ENCODE measurements at regions of chr6 and their contacts with region 1.

Region 1: DNA sequence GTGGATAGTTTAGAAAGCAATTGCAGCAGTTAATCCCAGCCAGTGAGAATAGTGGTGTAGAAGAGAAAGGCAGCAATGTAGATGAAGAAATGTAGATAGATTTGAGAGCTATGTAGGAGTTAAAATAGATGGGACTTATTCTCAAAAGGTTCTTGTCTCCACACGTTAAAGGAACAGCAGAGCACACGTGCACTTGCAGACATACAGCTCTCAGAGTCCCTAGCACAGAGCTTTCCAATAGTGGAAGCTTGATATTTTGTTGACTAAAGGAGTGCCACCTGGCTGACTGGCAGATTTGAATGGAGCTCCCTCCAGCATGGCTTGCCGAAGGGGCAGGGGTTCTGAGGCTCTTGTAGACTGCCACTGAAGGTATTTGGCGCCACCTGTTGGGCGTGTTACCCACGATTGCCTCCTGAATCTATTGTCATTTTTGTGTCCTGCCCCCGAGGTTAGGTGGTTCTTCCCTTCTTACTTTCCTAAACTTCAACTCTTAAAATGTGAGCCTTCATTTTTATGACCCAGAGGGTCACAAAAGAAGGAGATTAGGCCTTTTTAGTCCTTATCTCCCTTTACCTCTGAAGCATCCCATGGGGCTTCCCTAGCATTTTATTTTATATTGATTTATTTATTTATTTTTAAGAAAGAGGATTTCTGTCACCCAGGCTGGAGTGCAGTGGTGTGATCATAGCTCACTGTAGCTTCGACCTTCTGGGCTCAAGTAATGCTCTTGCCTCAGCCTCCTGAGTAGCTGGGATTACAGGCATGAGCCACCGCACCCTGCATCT is 16.4 kb downstream of the BRD2 start:
- DNase-seq: peak; percentile 75
- H3K4me3 Mint-ChIP-seq: no peak overlapping the region
- H3K27ac Mint-ChIP-seq: peak overlapping the region; percentile 29
- H3K4me1 Mint-ChIP-seq: peaks cover 19% of the 10 kb centered on the region
- H3K27me3 Mint-ChIP-seq: peaks cover 2% of the 10 kb centered on the region

Region 2: DNA sequence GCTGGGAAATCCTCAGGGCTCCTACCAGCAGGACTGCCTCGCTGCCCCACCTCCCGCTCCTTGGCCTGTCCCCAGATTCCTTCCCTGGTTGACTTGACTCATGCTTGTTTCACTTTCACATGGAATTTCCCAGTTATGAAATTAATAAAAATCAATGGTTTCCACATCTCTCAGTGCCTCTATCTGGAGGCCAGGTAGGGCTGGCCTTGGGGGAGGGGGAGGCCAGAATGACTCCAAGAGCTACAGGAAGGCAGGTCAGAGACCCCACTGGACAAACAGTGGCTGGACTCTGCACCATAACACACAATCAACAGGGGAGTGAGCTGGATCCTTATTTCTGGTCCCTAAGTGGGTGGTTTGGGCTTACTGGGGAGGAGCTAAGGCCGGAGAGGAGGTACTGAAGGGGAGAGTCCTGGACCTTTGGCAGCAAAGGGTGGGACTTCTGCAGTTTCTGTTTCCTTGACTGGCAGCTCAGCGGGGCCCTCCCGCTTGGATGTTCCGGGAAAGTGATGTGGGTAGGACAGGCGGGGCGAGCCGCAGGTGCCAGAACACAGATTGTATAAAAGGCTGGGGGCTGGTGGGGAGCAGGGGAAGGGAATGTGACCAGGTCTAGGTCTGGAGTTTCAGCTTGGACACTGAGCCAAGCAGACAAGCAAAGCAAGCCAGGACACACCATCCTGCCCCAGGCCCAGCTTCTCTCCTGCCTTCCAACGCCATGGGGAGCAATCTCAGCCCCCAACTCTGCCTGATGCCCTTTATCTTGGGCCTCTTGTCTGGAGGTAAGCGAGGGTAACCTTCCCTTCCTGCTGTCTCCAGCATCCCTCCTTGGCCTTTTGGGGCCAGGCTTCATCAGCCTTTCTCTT is 1039.1 kb before region 1 on chr6 and contains the start of gene CFB:
- intact Hi-C with region 1: no loop called
- DNase-seq: no peak
- H3K4me3 Mint-ChIP-seq: no peak within 1 kb of the TSS
- H3K27ac Mint-ChIP-seq: no peak within 1 kb of the TSS
- H3K4me1 Mint-ChIP-seq: peaks cover 5% of the 10 kb centered on the region
- H3K27me3 Mint-ChIP-seq: peaks cover 7% of the 10 kb centered on the region
- total RNA-seq, gene CFB: 0.16 TPM in 1 of 2 replicates, not detected in the other

Region 3: GRCh38 chr6:32439602-32440214 is 545.1 kb before region 1 on chr6 and contains the start of gene HLA-DRA:
- intact Hi-C with region 1: no loop called
- DNase-seq: peak; percentile 39
- H3K4me3 Mint-ChIP-seq: peak within 1 kb of the TSS; percentile 82
- H3K27ac Mint-ChIP-seq: peak within 1 kb of the TSS; percentile 64
- H3K4me1 Mint-ChIP-seq: peaks cover 26% of the 10 kb centered on the region
- H3K27me3 Mint-ChIP-seq: peaks cover 13% of the 10 kb centered on the region
- total RNA-seq, gene HLA-DRA: 20.8 and 23.7 TPM in 2 replicates

Region 4: DNA sequence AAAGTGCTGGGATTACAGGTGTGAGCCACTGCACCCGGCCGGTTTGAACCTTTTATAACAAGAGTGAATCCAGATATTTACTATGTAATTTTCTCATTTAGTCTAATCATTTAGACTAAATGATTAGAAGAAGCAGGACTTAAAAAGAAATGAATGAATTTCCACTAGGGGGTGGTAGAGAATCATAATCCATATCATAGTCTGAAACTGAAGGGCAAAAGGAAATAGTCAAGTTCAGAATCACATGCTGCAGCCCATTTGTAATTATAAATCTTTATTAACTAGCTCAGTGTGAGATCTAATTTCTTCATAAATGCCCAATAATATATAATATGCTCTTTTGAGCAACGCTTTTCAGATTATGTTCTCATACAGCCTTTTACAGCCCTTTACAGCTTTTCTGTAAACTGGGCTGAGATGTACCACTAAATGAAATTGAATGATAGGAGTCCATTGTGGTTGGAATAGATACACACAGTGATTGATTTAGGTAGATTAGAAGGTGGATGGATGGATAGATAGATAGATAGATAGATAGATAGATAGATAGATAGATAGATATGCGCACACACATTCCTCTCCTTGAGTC is 99.0 kb before region 1 on chr6:
- intact Hi-C with region 1: loop called (anchors 1 kb)
- DNase-seq: no peak
- H3K4me3 Mint-ChIP-seq: no peak overlapping the region
- H3K27ac Mint-ChIP-seq: no peak overlapping the region
- H3K4me1 Mint-ChIP-seq: peaks cover 8% of the 10 kb centered on the region
- H3K27me3 Mint-ChIP-seq: no peaks in the 10 kb centered on the region

Region 5: DNA sequence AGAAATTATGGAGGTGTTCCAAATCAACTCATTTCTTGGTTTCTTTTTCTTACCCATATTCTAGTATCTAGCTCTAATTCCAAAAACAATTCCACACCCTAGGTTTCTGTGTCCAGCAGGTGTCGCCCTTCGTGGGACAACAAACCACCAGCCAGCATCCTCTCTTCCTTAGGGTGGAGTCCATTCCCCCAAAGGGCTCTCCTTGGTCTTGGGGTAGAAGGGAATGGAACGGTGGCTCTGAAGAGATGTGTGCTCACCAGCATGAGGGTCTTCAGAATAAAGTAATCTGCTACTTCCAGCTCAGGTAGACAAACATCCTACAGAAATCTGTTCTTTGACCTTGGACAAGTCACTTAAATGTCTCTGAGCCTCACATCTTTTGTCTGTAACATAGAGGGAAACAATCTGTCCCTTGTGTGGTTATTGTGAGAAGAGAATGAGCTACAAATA is 51.1 kb before region 1 on chr6:
- intact Hi-C with region 1: loop called (anchors 2 kb)
- DNase-seq: peak; percentile 63
- H3K4me3 Mint-ChIP-seq: no peak overlapping the region
- H3K27ac Mint-ChIP-seq: no peak overlapping the region
- H3K4me1 Mint-ChIP-seq: peaks cover 10% of the 10 kb centered on the region
- H3K27me3 Mint-ChIP-seq: peaks cover 15% of the 10 kb centered on the region